ENCODE measurements at regions of chr9 and their contacts with region 1.

Region 1: GRCh38 chr9:98315551-98316060 is 60.2 kb upstream of the TBC1D2 start:
- DNase-seq: peak; percentile 60 to 80
- ATAC-seq: peak; percentile 74 to 86 (median 82)
- H3K4me3 ChIP-seq: no peak overlapping the region
- H3K27ac ChIP-seq: no peak overlapping the region
- H3K4me1 ChIP-seq: no peaks in the 10 kb centered on the region
- H3K27me3 ChIP-seq: no peaks in the 10 kb centered on the region
- CTCF ChIP-seq: peak; percentile 79

Region 2: DNA sequence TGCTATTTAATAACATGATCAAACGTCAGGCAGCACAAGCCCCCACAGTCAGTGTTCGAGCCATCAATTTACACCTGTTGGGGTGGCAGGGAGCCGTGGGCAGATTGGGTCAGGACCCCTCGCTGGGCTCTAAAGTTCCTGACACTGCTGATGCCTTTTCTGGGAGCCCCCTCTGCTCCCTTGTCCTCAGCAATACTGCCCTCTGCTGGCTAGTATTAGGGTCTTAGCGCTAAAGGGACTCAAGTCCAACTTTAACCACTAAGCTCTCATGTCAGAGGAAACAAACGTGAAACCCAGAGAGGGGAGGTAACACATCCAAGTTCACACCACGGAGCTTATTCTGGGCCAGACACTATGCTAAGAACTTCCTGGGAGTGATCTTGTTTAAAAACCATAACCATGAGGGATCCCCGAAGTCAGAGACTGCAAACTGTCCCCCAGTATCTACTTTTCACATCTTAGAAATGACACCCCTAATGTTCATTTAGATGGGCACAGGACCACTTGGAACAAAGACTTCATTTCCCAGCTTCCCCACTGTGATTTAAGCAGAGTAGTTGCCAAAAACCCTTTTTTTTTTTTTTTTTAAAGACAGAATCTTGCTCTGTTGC is 460.3 kb after region 1 on chr9:
- intact Hi-C with region 1: loop called (anchors 2 to 5 kb)
- DNase-seq: no peak
- ATAC-seq: peak in 2 of 4 donors; percentile 49 to 53
- H3K4me3 ChIP-seq: no peak overlapping the region
- H3K27ac ChIP-seq: no peak overlapping the region
- H3K4me1 ChIP-seq: no peaks in the 10 kb centered on the region
- H3K27me3 ChIP-seq: no peaks in the 10 kb centered on the region
- CTCF ChIP-seq: peak; percentile 63

Measured in psoas muscle (tissue), 8 donors.